PC-3 (cell line): ENCODE measurements at regions of chr2 and their contacts with region 1.

Region 1: DNA sequence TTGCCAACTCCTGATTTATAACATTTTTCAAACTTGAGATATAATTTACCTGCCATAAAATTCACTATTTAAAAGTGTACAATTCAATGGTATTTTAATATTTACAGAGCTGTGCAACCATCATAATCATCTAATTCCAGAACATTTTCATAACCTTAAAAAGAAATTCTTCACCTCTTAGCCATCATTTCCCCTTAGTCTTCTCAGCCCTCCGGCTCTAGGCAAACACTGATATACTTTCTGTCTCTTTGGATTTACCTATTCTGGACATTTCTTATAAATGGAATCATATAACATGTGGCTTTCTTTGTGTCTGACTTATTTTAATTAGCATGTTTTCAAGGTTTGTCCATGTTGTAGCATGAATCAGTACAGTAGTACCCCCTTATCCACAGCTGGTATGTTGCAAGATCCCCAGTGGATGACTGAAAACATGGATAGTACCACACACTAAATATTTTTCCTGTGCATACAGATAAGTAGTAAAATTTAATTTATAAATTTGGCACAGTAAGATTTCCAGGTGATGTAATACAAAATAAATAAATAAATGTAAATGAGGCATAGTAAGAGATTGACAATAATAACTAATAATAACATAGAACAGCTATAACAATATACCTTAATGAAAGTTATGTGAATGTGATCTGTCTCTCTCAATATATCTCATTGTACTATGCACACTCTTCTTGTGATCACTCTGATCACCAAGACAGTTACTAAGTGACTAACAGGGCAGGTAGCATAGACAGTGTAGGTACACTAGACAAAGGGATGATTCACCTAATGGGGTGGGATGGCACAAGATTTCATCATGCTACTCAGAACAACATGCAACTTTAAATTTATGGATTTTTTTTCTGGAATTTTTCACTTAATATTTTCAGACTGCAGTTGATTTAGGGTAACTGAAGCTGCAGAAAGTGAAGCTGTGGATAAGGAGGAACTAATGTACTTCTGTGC is 73.1 kb downstream of the RAB3GAP1 start:
- DNase-seq: peak; percentile 62
- ATAC-seq: peak; percentile 89
- H3K4me3 ChIP-seq: no peak overlapping the region
- H3K27ac ChIP-seq: no peak overlapping the region
- H3K4me1 ChIP-seq: peaks cover 20% of the 10 kb centered on the region
- H3K27me3 ChIP-seq: no peaks in the 10 kb centered on the region
- CTCF ChIP-seq: no peak

Region 2: DNA sequence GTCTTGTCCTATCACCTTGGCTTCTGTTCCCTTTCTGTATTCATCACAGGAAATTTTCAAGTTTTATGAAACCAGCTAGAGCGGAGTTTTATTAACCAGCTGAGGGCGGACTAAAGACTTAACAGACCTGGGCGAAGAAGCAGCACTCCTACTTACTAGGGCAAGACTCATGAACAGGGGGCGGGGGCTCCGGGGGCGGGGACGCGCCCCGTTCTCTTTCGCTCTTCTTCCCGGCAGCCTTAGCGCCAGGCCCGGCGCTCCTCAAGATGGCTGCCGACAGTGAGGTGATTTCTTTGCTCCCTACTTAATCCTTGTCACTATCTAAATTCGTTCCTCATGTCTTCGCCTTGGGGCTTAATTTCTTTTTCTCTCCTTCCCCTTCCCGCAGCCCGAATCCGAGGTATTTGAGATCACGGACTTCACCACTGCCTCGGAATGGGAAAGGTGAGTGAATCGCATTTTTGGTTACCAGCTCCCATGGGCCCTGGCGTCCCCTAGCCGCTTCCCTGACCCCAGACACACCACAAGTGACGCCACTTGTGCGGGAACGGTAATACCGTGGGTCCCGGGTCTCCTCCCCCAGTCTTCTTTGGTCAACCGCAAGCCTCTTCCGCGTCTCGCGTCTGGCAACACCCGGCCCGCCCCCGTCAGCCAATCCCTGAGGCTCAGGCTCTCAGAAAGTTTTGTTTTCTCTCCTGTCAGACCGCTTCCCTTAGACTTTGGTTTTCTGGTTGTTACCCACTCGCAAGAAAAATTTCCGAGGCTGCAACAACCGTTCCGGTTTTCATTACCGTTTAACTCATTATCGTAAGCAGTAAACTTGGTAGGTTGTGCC is 72.9 kb before region 1 on chr2 and contains the start of gene RAB3GAP1:
- CTCF ChIA-PET with region 1: no interaction called
- POLR2A ChIA-PET with region 1: interaction called, 4 read pairs
- intact Hi-C with region 1: loop called (anchors 1 kb)
- DNase-seq: peak; percentile 82
- ATAC-seq: peak; percentile 94
- H3K4me3 ChIP-seq: peak within 1 kb of the TSS; percentile 92
- H3K27ac ChIP-seq: peak within 1 kb of the TSS; percentile 67
- H3K4me1 ChIP-seq: peaks cover 23% of the 10 kb centered on the region
- H3K27me3 ChIP-seq: no peaks in the 10 kb centered on the region
- CTCF ChIP-seq: 0 out of 2 replicates have a peak, but pooled peaks have one; percentile 12
- total RNA-seq, gene RAB3GAP1: 35.8 and 41.1 TPM in 2 replicates

Region 3: GRCh38 chr2:135093670-135094330 is 31.4 kb before region 1 on chr2:
- CTCF ChIA-PET with region 1: no interaction called
- POLR2A ChIA-PET with region 1: no interaction called
- intact Hi-C with region 1: loop called (anchors 2 kb)
- DNase-seq: no peak
- ATAC-seq: peak; percentile 8
- H3K4me3 ChIP-seq: no peak overlapping the region
- H3K27ac ChIP-seq: peak overlapping the region; percentile 43
- H3K4me1 ChIP-seq: peaks cover 51% of the 10 kb centered on the region
- H3K27me3 ChIP-seq: no peaks in the 10 kb centered on the region
- CTCF ChIP-seq: no peak

Region 4: GRCh38 chr2:135103843-135104242 is 21.4 kb before region 1 on chr2:
- CTCF ChIA-PET with region 1: no interaction called
- POLR2A ChIA-PET with region 1: no interaction called
- intact Hi-C with region 1: no loop called
- DNase-seq: no peak
- ATAC-seq: no peak
- H3K4me3 ChIP-seq: no peak overlapping the region
- H3K27ac ChIP-seq: no peak overlapping the region
- H3K4me1 ChIP-seq: no peaks in the 10 kb centered on the region
- H3K27me3 ChIP-seq: no peaks in the 10 kb centered on the region
- CTCF ChIP-seq: no peak

Region 5: DNA sequence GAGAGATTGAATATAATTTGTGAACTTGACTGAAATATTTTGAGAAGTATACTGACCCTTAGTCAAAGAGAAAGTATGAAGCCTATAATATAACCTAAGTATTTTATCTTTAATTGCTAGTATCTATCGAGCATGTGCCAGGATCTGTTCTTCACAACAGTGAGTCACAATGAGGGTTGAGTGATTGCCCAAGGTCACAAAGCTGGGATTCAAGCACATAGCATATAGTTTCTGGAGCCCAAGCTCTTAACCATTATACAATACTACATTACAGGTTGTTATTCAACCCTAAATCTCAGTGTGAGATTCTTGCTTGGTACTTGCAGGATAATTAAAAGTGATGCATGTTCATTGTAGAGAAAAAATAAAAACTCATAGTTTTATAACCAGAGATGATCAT is 24.0 kb after region 1 on chr2:
- CTCF ChIA-PET with region 1: no interaction called
- POLR2A ChIA-PET with region 1: interaction called, 47 read pairs
- intact Hi-C with region 1: no loop called
- DNase-seq: peak; percentile 20
- ATAC-seq: 0 out of 2 replicates have a peak, but pooled peaks have one; percentile 27
- H3K4me3 ChIP-seq: no peak overlapping the region
- H3K27ac ChIP-seq: no peak overlapping the region
- H3K4me1 ChIP-seq: peaks cover 27% of the 10 kb centered on the region
- H3K27me3 ChIP-seq: no peaks in the 10 kb centered on the region
- CTCF ChIP-seq: no peak

Region 6: DNA sequence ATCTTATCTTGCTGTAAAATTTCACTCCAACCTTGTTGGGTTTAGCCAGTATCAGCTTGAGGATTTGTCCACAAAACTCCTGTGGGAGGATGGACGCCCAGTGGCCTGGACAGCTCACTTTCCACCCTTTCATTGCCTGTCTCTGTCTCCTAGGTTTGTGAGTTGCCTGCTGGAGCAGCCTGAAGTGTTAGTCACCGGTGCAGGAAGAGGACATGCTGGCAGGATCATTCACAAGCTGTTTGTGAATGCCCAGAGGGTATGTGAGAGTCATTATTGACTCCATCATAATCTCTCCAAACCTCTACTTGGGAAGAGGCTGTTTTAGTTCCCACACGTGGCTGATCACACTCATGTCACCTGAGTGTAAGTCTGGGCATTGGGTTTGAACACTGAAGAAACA is 39.2 kb after region 1 on chr2:
- CTCF ChIA-PET with region 1: no interaction called
- POLR2A ChIA-PET with region 1: no interaction called
- intact Hi-C with region 1: loop called (anchors 1 kb)
- DNase-seq: peak; percentile 96
- ATAC-seq: peak; percentile 97
- H3K4me3 ChIP-seq: no peak overlapping the region
- H3K27ac ChIP-seq: peak overlapping the region; percentile 88
- H3K4me1 ChIP-seq: peaks cover 36% of the 10 kb centered on the region
- H3K27me3 ChIP-seq: no peaks in the 10 kb centered on the region
- CTCF ChIP-seq: no peak

Region 7: GRCh38 chr2:135258193-135258592 is 133.0 kb after region 1 on chr2:
- CTCF ChIA-PET with region 1: no interaction called
- POLR2A ChIA-PET with region 1: no interaction called
- intact Hi-C with region 1: loop called (anchors 1 kb)
- DNase-seq: peak; percentile 60
- ATAC-seq: peak; percentile 82
- H3K4me3 ChIP-seq: no peak overlapping the region
- H3K27ac ChIP-seq: peak overlapping the region; percentile 85
- H3K4me1 ChIP-seq: peaks cover 19% of the 10 kb centered on the region
- H3K27me3 ChIP-seq: no peaks in the 10 kb centered on the region
- CTCF ChIP-seq: peak; percentile 56